GM12878 (cell line): ENCODE measurements at regions of chr3 and their contacts with region 1.

Region 1: DNA sequence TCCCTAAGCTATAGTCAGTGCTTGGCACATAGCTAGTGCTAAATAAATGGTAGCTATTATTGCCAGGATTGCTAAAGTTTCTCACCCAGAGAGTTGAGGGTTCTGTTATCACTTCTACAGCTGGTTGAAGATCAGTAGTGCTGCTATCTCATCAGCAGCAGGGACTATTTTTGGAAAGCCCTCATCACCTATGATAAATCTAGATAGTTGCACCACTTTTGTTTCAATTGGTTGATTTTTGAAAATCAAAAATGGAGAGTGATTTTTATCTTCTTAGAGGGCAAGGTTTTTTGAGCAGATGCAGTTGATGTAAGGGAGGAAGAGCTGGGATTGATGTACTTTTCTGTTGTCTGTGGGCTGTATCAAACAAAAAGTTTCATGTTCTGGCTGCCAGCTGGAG is 101.6 kb downstream of the ST6GAL1 start:
- DNase-seq: no peak
- ATAC-seq: peak; percentile 4; the same call in 2 of the 3 replicates
- H3K4me3 ChIP-seq: peak overlapping the region; percentile 47; the same call in 1 of the 2 replicates
- H3K27ac ChIP-seq: peak overlapping the region; percentile 57
- H3K4me1 ChIP-seq: peaks cover 43% of the 10 kb centered on the region
- H3K27me3 ChIP-seq: no peaks in the 10 kb centered on the region
- CTCF ChIP-seq: no peak
- EP300 ChIP-seq: no peak
- POLR2A ChIP-seq: 0 out of 2 replicates have a peak, but pooled peaks have one; percentile 16
- RAD21 ChIP-seq: no peak

Region 2: GRCh38 chr3:186798239-186798874 is 233.6 kb before region 1 on chr3:
- CTCF ChIA-PET with region 1: no interaction called
- POLR2A ChIA-PET with region 1: no interaction called
- RAD21 ChIA-PET with region 1: no interaction called
- SMC1A ChIA-PET with region 1: no interaction called
- in situ Hi-C with region 1: no loop called
- intact Hi-C with region 1: no loop called
- DNase-seq: no peak
- ATAC-seq: peak; percentile 48; the same call in 2 of the 3 replicates
- H3K4me3 ChIP-seq: no peak overlapping the region
- H3K27ac ChIP-seq: no peak overlapping the region
- H3K4me1 ChIP-seq: peaks cover 6% of the 10 kb centered on the region; the same call in 1 of the 2 replicates
- H3K27me3 ChIP-seq: no peaks in the 10 kb centered on the region
- CTCF ChIP-seq: no peak
- EP300 ChIP-seq: no peak
- POLR2A ChIP-seq: no peak
- RAD21 ChIP-seq: no peak

Region 3: DNA sequence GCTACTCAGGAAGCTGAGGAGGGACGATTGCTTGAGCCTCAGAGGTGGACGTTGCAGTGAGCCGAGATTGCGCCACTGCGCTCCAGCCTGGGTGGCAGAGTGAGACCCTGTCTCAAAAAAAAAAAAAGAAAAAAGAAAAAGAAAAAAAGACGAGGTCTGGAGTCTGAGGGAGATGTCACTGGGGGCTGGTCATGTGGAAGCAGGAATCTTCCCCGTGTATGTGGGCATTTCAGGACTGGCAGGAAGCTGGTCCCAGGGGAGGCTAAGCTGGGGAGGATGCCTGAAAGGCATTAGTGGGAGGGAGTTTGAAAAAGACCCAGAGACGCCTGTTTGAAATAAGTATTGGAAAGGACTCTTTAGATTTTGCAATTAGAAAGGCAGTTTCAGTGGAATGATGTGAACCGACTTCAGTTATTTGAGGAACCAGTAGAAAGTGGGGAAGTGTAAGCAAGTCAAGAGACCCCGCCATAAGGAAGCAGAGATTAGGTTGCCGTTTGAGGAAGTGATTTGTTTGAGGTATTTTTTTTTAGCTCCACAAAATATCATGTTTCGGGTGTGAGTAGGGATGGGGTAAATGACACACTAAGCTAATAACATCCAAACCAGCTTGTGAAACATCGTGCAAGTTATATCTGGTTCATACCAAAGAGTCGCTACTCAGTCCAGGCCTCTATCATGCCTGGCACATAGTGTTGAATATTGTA is 46.1 kb before region 1 on chr3:
- CTCF ChIA-PET with region 1: interaction called, 10 read pairs
- POLR2A ChIA-PET with region 1: interaction called, 10 read pairs
- RAD21 ChIA-PET with region 1: interaction called, 39 read pairs
- SMC1A ChIA-PET with region 1: interaction called, 29 read pairs
- in situ Hi-C with region 1: no loop called
- intact Hi-C with region 1: loop called (anchors 5 kb)
- DNase-seq: peak; percentile 56
- ATAC-seq: peak; percentile 38
- H3K4me3 ChIP-seq: no peak overlapping the region; the same call in 1 of the 2 replicates
- H3K27ac ChIP-seq: peak overlapping the region; percentile 82
- H3K4me1 ChIP-seq: peaks cover 43% of the 10 kb centered on the region
- H3K27me3 ChIP-seq: no peaks in the 10 kb centered on the region
- CTCF ChIP-seq: no peak
- EP300 ChIP-seq: no peak
- POLR2A ChIP-seq: no peak
- RAD21 ChIP-seq: no peak

Region 4: DNA sequence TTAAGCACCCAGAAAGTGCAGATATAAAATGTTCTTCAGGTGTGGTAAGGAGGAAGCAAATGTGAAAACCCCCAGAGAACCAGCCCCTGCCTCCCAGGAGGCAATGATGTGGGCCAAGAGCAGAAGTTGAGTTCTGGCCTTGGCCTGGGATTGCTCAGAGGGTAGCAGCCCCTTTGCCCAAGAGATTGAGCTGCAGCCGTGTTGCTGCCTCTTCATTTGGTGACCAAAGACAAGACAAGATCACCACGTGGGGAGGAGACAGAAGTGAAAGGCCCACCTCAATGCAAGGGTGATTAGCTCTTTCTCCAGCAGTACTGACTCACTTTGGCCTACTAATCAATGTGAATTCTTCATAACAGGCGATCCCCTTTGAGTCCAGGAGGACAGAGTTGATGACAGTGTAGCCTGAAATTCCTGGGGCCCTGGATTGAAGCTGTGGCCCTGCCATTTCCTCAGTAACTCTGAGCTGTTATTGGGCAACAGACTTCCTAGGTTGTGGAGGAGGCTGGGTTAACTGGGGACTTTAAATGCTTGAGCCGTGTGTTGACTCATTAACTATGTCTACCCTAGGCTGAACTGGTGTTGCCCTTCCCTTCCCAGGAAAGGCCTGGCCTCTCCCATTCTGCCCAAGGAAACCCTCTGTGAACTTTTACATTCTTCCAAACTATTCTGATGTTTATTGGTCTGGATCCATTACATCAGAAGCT is 15.1 kb before region 1 on chr3:
- CTCF ChIA-PET with region 1: interaction called, 13 read pairs
- POLR2A ChIA-PET with region 1: interaction called, 26 read pairs
- RAD21 ChIA-PET with region 1: interaction called, 38 read pairs
- SMC1A ChIA-PET with region 1: interaction called, 68 read pairs
- in situ Hi-C with region 1: no loop called
- intact Hi-C with region 1: no loop called
- DNase-seq: no peak
- ATAC-seq: peak; percentile 68
- H3K4me3 ChIP-seq: peak overlapping the region; percentile 11; the same call in 1 of the 2 replicates
- H3K27ac ChIP-seq: peak overlapping the region; percentile 72
- H3K4me1 ChIP-seq: peaks cover 80% of the 10 kb centered on the region
- H3K27me3 ChIP-seq: no peaks in the 10 kb centered on the region
- CTCF ChIP-seq: no peak
- EP300 ChIP-seq: no peak
- POLR2A ChIP-seq: peak; percentile 46; the same call in 1 of the 2 replicates
- RAD21 ChIP-seq: no peak

Region 5: DNA sequence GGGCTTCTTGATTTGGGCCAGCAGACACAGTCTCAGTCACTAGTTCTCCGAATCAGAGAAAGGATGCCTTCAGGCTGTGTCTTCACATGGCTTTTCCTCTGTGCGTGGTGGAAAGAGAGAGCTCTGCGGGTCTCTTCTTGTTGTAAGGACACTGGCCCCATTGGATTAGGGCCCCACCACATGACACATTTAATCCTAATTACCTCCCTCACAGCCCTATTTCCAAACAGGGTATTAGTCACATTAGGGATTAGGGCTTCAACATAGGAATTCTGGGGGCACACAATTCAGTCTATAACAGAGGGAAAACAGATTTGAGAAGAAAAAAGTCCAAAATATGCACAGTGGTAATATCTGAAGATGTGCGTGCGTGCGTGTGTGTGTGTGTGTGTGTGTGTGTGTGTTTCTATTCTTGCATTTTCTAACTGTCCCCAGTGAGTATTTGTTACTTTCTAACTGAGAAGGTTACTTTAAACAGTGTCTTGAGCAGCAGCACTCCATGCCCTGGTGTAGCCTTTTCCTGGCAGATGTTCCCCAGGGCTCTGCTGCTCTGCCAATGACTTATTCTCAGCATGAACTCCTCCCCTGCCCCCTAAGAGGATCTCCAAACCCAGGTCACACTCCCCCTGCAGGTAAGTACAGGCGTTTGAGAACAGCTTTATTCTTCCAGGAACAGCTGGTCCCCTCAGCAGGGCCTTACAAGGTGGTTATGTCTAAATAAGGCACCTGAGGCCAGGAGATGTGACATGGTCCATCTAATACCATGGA is 34.5 kb after region 1 on chr3:
- CTCF ChIA-PET with region 1: interaction called, 19 read pairs
- POLR2A ChIA-PET with region 1: interaction called, 13 read pairs
- RAD21 ChIA-PET with region 1: interaction called, 37 read pairs
- SMC1A ChIA-PET with region 1: interaction called, 18 read pairs
- in situ Hi-C with region 1: no loop called
- intact Hi-C with region 1: loop called (anchors 1 kb)
- DNase-seq: no peak
- ATAC-seq: peak; percentile 67
- H3K4me3 ChIP-seq: no peak overlapping the region
- H3K27ac ChIP-seq: peak overlapping the region; percentile 82
- H3K4me1 ChIP-seq: peaks cover 41% of the 10 kb centered on the region
- H3K27me3 ChIP-seq: no peaks in the 10 kb centered on the region
- CTCF ChIP-seq: peak; percentile 34 to 71 (median 48); a peak in 5 of 6 replicates
- EP300 ChIP-seq: no peak
- POLR2A ChIP-seq: peak; percentile 22; the same call in 1 of the 2 replicates
- RAD21 ChIP-seq: peak; percentile 71

Region 6: DNA sequence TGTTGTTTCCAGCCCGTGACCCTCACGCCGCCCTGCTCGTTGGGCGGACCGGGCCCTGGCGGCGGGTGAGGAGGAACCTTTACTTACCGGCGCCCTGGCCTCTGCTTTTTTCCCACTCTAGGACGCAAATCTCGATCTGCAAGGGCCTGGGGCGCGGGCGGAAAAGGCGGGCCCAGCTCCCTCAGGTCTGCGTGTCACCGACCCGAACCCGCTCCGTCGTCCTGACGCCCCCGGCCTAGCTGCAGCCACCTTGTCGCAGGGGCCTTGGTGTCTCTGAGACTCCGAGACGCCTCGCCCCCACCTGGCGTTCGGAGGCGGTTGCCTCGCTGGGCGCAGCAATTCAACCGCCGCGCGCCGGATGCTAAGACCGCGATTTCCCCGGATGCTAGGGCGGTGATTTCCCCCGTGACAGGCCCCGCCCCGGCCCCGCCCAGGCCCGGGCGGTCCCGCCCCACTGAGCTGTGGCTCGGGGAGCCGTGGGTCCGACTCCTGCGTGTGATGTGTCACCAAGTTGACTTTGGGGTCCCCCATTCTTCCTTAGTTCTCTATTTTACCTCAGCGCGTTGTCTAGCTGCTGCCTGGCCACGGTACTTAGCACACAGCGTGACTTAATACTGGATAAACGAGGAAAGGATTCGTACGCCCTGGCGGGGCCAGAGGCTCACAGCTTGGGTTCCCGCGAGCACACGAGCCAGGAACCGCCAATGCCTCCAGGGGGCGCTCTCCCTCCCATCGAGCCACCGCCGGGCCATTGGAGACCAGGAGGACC is 107.4 kb after region 1 on chr3 and contains the start of gene RPL39L:
- CTCF ChIA-PET with region 1: interaction called, 3 read pairs
- POLR2A ChIA-PET with region 1: interaction called, 4 read pairs
- RAD21 ChIA-PET with region 1: interaction called, 16 read pairs
- SMC1A ChIA-PET with region 1: interaction called, 3 read pairs
- in situ Hi-C with region 1: no loop called
- intact Hi-C with region 1: no loop called
- DNase-seq: peak; percentile 64
- ATAC-seq: peak; percentile 99
- H3K4me3 ChIP-seq: peak within 1 kb of the TSS; percentile 63
- H3K27ac ChIP-seq: peak within 1 kb of the TSS; percentile 92
- H3K4me1 ChIP-seq: peaks cover 7% of the 10 kb centered on the region; the same call in 1 of the 2 replicates
- H3K27me3 ChIP-seq: no peaks in the 10 kb centered on the region
- CTCF ChIP-seq: peak; percentile 80 to 86 (median 84)
- EP300 ChIP-seq: no peak
- POLR2A ChIP-seq: peak; percentile 96
- RAD21 ChIP-seq: no peak
- polyA plus RNA-seq, gene RPL39L: 12.5 to 33.7 TPM